ENCODE measurements at regions of chr15 and their contacts with region 1.

Region 1: DNA sequence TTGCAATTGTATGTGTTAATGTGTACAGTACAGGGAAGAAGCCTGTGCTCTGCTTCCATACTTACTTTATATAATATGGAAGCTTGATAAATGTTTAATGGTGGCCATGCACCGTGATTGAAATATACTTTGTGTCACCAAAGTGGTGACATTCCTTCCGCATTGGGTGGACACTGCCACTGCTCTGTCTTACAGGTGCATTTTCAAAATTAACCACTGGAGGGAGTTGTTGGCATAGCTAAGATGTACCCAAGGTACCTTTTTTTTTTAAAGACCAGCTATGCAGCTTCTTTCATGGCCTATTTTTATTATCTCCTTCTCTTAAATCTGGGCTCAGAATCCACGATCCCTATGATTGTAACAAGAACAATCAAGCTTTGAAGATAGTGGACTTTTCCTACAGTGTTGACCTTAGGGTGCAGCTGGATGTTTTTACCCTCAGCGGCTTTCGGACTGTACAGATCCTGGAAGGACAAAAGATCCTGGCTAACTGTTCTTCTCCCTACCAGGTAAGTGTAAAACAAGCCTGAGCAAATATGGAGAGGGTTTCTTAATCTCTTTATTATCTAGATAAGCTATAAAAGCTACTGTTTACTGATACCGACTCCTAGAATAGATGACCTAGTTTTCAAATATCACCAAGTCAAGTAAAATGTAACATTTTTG is 21.6 kb upstream of the PAK6 start:
- DNase-seq: peak; percentile 12
- H3K4me3 ChIP-seq: no peak overlapping the region
- CTCF ChIP-seq: peak; percentile 60

Region 2: DNA sequence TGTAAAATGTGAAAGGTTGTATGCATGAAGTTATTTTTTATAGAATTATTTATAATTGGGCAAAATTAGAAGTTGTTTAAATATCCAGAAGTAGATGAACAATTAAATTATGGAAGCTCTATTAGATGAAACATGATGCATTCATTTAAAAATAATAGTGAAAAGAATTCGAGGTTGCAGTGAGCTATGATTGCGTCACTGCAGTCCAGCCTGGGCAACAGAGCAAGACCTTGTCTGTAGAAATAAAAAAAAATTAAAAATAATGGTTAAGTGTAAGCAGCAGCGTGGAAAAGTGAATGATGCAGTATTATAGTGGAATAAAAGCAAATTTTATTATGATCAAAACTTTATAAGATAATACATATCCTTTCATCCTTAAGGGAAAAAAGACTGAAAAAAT is 42.1 kb before region 1 on chr15:
- CTCF ChIA-PET with region 1: interaction called, 10 read pairs
- POLR2A ChIA-PET with region 1: no interaction called
- DNase-seq: no peak
- H3K4me3 ChIP-seq: no peak overlapping the region
- CTCF ChIP-seq: no peak

Region 3: DNA sequence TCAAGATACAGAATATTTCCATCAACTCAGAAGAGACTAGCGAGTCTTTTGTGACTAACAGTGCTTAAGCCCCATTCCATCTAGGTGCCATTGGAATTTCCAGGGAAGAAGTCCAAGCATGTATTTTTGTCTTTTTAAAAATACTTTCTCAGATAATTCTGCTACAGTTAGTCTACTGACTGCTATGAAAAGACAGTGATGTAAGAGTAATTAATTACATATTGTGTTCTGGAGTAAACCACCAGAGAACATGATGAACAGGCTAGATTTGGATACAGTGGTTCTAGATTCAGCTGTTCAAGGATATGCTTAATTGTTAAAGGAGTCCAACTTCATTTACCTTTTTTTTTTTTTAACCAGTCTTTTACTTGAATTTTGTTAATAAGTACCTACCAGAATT is 13.2 kb before region 1 on chr15:
- CTCF ChIA-PET with region 1: interaction called, 80 read pairs
- POLR2A ChIA-PET with region 1: no interaction called
- DNase-seq: no peak
- H3K4me3 ChIP-seq: no peak overlapping the region
- CTCF ChIP-seq: no peak

Region 4: GRCh38 chr15:40256638-40257235 is 39.4 kb after region 1 on chr15:
- CTCF ChIA-PET with region 1: interaction called, 1,718 read pairs
- POLR2A ChIA-PET with region 1: no interaction called
- DNase-seq: peak; percentile 51
- H3K4me3 ChIP-seq: no peak overlapping the region
- CTCF ChIP-seq: no peak

Region 5: DNA sequence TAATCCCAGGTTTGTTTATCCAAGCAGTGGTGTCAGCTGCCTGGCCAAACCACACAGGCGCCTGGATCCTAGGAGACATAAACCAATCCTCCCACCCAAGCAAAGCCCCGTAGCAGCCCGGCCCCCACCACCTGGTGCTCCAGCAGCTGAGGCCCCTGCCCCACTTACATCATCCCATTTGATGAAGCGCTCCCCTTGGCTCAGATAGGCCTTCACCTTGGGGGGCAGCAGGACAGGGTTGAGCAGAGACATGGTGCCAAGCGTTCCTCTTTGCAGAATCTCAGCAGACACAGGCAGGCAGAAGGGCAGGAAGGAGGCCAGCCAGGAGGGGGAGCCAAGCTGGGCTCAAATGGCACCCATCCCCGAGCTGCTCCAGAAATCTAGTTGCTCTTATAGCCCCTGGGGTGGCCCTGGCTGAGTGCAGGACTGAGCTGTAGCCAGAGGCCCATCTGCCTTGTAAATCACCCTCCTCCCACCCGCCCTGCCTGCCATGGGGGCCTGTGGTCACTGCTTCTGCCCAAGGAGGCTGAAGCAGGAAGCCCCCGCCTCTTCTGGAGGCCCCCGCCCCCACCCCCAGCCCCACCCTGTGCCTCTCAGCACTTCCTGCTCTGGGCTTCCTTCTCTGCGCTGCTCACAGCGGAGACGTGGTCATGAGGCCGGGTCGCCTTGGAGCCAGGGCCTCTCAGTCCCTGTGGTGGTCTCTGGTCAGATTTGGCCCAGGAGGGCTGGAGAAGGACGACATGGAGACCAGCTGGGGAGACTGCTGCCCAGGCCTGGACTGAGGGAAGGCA is 90.3 kb after region 1 on chr15 and contains the start of gene PLCB2:
- CTCF ChIA-PET with region 1: interaction called, 35 read pairs
- POLR2A ChIA-PET with region 1: no interaction called
- DNase-seq: no peak
- H3K4me3 ChIP-seq: no peak within 1 kb of the TSS
- CTCF ChIP-seq: peak; percentile 52

Measured in AG04449 (cell line).